ENCODE measurements at regions of chr11 and their contacts with region 1.

Region 1: DNA sequence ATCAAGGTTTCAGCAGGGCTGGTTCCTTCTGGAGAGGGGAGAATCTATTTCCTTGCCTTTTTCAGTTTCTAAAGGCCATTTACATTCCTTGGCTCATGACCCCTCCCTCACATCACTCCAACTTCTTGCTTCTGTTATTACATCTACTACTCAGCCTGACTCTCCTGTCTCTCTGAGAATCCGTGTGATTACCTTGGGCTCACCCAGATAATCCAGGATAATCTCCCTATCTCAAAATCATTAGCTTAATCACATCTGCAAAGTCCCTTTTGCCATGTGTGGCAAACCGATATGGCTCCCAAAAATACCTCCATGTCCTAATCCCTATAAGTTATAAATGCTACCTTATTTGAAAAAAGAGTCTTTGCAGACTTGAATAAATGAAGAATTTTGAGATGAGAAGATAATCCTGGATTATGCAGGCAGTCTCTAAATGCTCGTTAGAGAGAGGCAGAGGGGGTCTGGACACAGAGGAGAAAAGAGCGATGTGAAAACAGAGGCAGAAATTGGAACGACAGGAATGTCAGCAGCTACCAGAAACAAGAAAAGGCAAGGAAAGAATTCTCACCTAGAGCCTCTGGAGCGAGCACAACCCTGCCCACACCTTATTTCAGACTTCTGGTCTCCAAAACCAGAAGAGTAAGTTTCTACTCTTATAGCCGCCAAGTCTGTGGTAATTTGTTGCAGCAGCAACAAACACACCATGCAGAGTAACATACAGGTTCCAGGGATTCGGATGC is 23.6 kb upstream of the ARHGAP32 start:
- DNase-seq: peak; percentile 14
- ATAC-seq: peak; percentile 92
- H3K4me3 Mint-ChIP-seq: peak overlapping the region; percentile 29; the same call in 1 of the 2 replicates
- H3K27ac Mint-ChIP-seq: peak overlapping the region; percentile 98
- H3K4me1 Mint-ChIP-seq: peaks cover 72% of the 10 kb centered on the region
- H3K27me3 Mint-ChIP-seq: no peaks in the 10 kb centered on the region
- CTCF ChIP-seq: no peak

Region 2: DNA sequence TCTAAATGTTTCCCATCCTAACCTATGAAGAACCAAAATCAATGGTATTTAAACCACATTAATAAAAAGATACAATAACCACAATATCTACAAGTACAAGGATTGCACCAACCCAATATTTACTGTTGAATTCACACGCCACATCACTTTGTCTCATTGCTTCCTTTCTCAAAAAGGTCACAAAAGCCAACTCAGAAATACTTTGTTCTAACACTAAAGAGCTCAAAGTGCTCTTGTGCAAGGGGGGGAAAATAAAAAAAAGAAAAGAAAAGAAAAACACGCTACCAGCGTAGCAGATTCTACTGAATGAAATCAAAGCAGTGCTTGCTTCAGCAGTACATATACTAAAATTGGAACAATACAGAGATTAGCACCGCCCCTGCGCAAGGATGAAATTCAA is 13.0 kb before region 1 on chr11:
- CTCF ChIA-PET with region 1: no interaction called
- POLR2A ChIA-PET with region 1: no interaction called
- DNase-seq: no peak
- ATAC-seq: no peak
- H3K4me3 Mint-ChIP-seq: no peak overlapping the region
- H3K27ac Mint-ChIP-seq: 0 out of 2 replicates have a peak overlapping the region, but pooled peaks have one; percentile 2
- H3K4me1 Mint-ChIP-seq: peaks cover 20% of the 10 kb centered on the region
- H3K27me3 Mint-ChIP-seq: no peaks in the 10 kb centered on the region
- CTCF ChIP-seq: no peak

Region 3: GRCh38 chr11:129346916-129347315 is 131.2 kb after region 1 on chr11:
- CTCF ChIA-PET with region 1: no interaction called
- POLR2A ChIA-PET with region 1: interaction called, 11 read pairs
- DNase-seq: no peak
- ATAC-seq: no peak
- H3K4me3 Mint-ChIP-seq: no peak overlapping the region
- H3K27ac Mint-ChIP-seq: no peak overlapping the region
- H3K4me1 Mint-ChIP-seq: no peaks in the 10 kb centered on the region
- H3K27me3 Mint-ChIP-seq: 0 out of 2 replicates have a peak, but pooled peaks cover 1% of the 10 kb centered on the region
- CTCF ChIP-seq: no peak